H1 (cell line): ENCODE measurements at regions of chr20 and their contacts with region 1.

Region 1: DNA sequence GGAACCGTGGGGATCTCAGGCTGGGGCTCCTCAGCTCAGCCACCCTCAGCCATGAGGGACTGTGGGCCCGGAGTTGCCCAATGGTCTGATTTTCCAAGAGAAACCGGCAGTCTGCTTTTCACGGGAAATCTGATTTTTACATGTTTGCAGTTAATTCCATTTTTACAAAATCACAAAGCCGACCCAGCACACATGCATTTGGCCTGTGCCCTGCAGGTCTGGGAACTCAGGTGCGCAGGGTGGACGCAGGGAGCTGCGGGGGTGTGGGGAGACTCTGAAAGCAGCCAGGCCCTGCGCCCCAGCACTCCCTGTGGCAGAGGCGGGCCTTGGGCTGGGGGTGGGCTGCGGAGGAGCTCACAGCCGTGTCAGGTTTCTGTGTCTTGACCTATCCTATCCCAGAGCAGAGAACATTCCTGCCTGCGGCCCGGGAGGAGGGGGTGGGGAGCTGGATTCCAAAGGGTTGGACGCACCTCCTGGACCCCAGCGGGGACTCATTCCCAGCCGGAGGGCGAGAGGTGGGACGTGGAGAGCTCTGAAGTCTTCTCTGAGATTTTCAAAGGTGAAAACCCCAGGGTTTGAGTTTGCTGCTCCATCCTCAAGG is 60.6 kb downstream of the ADNP start:
- DNase-seq: peak; percentile 84 to 86
- H3K4me3 ChIP-seq: peak overlapping the region; percentile 28 to 57 (median 40)
- H3K27ac ChIP-seq: peak overlapping the region; percentile 80
- H3K4me1 ChIP-seq: peaks cover 6 to 21% (median 16%) of the 10 kb centered on the region in 4 experiments
- H3K27me3 ChIP-seq: no peaks in the 10 kb centered on the region
- CTCF ChIP-seq: no peak
- EP300 ChIP-seq: peak in 1 of 2 experiments; percentile 44; a peak in 1 of 3 replicates
- POLR2A ChIP-seq: peak in 1 of 2 experiments; percentile 73; a peak in 2 of 3 replicates
- RAD21 ChIP-seq: peak in 1 of 2 experiments; percentile 1; a peak in 1 of 4 replicates

Region 2: DNA sequence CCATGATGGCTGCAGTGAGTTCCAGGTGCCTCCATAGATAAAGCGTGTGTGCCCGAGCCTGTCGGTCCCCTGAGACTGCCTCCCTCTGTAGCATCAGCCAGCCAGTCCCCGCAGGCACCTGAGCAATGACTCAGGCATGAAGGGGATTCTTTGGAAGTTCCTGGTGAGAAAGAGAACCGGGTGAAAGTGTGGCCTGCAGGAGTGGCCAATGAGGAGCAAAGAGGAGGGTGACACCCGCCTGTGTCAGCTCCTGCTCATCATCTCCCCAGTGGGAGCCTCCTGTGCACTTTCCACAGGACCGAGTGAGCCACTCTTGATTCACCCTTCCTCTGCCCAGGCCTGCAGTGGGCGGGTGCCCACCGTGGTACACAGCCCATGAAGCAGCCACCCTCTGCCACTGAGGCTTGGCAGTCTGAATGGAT is 431.7 kb before region 1 on chr20:
- CTCF ChIA-PET with region 1: no interaction called
- POLR2A ChIA-PET with region 1: no interaction called
- DNase-seq: no peak
- H3K4me3 ChIP-seq: no peak overlapping the region
- H3K27ac ChIP-seq: no peak overlapping the region
- H3K4me1 ChIP-seq: peaks cover 0 to 2% (median under 1%) of the 10 kb centered on the region in 4 experiments; a peak in 2 of 7 replicates
- H3K27me3 ChIP-seq: no peaks in the 10 kb centered on the region
- CTCF ChIP-seq: no peak
- EP300 ChIP-seq: no peak
- POLR2A ChIP-seq: no peak
- RAD21 ChIP-seq: no peak

Region 3: GRCh38 chr20:50837532-50838506 is 32.8 kb before region 1 on chr20:
- CTCF ChIA-PET with region 1: no interaction called
- POLR2A ChIA-PET with region 1: no interaction called
- DNase-seq: no peak
- H3K4me3 ChIP-seq: no peak overlapping the region
- H3K27ac ChIP-seq: no peak overlapping the region
- H3K4me1 ChIP-seq: no peaks in the 10 kb centered on the region
- H3K27me3 ChIP-seq: no peaks in the 10 kb centered on the region
- CTCF ChIP-seq: no peak
- EP300 ChIP-seq: no peak
- POLR2A ChIP-seq: no peak
- RAD21 ChIP-seq: no peak

Region 4: GRCh38 chr20:50883856-50884255 is 13.2 kb after region 1 on chr20:
- CTCF ChIA-PET with region 1: interaction called, 11 read pairs
- POLR2A ChIA-PET with region 1: interaction called, 87 read pairs
- DNase-seq: no peak
- H3K4me3 ChIP-seq: no peak overlapping the region
- H3K27ac ChIP-seq: no peak overlapping the region
- H3K4me1 ChIP-seq: no peaks in the 10 kb centered on the region
- H3K27me3 ChIP-seq: no peaks in the 10 kb centered on the region
- CTCF ChIP-seq: no peak
- EP300 ChIP-seq: no peak
- POLR2A ChIP-seq: no peak
- RAD21 ChIP-seq: no peak

Region 5: GRCh38 chr20:50891138-50891537 is 20.5 kb after region 1 on chr20:
- CTCF ChIA-PET with region 1: interaction called, 8 read pairs
- POLR2A ChIA-PET with region 1: interaction called, 87 read pairs
- DNase-seq: no peak
- H3K4me3 ChIP-seq: no peak overlapping the region
- H3K27ac ChIP-seq: no peak overlapping the region
- H3K4me1 ChIP-seq: no peaks in the 10 kb centered on the region
- H3K27me3 ChIP-seq: no peaks in the 10 kb centered on the region
- CTCF ChIP-seq: no peak
- EP300 ChIP-seq: no peak
- POLR2A ChIP-seq: peak in 1 of 2 experiments; percentile 26; a peak in 1 of 3 replicates
- RAD21 ChIP-seq: no peak

Region 6: DNA sequence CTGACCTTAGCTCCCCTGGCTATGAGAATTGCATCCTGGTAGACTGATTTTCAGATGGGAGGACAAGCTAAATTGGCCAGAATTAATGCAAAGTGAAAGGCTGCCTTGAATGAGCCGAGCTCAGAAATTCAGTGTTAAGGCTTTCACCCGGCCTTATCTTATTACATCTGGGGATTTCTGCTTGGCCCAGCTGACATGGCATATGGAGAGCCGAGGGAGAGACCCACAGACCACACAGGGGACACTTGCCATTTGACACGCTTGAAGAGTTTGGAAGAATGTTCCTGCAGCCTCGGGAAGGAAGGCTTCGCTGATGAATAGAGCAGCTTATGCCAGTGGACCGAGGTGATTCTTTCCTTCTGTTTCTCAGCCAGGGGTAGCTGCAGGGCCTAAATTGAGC is 96.9 kb after region 1 on chr20:
- CTCF ChIA-PET with region 1: no interaction called
- POLR2A ChIA-PET with region 1: no interaction called
- DNase-seq: peak in 1 of 2 experiments; percentile 14
- H3K4me3 ChIP-seq: no peak overlapping the region
- H3K27ac ChIP-seq: no peak overlapping the region
- H3K4me1 ChIP-seq: peaks cover 0 to 2% (median 0%) of the 10 kb centered on the region in 4 experiments; a peak in 1 of 7 replicates
- H3K27me3 ChIP-seq: no peaks in the 10 kb centered on the region
- CTCF ChIP-seq: no peak
- EP300 ChIP-seq: no peak
- POLR2A ChIP-seq: no peak
- RAD21 ChIP-seq: no peak